Activated CD8-positive, alpha-beta T cell treated with anti-CD3 and anti-CD28 coated beads, Interleukin-2, amount 10 ng/mL, durations not matched to agents 7 days and 5 days (primary cell): ENCODE measurements at regions of chr6 and their contacts with region 1.

Region 1: DNA sequence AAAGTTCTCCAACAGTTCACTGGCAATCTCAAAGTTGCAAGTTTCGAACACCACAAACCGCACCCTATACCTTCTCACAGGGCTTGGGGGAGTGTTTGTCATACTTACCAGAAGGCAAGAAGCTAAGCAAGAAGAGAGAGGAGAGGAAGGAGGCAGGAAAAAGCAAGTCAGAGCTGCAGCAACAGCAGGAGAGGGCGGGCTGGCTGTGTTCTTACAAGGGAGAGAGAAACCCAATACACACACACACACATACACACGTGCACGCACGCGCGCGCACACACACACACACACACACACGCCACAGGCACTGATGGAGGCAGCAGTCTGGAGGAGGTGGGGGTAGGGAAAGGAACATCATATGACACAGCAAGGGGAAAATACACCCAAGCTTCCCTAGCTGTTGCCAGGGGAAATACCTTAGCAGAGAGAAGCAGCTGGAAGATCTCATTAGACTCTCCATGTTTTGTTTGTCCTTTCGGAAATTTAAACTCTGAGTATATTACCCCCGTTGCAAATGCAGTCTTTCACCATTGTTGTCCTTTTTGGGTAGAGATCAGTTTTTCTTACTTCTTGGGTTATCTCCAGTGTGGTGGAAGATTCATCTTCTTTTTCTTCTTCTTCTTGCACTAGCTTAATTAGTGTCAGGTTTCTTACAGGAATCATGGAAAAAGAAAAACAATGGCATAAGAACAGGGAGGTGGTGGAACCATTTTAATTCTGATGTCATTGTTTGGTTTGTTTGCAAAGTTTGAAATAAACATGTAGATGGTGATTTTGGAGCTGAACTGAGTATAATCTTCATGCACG is at the start of gene TXLNB:
- DNase-seq: peak; percentile 89
- ATAC-seq: peak; percentile 94
- H3K4me3 Mint-ChIP-seq: peak within 1 kb of the TSS; percentile 68
- H3K27ac Mint-ChIP-seq: peak within 1 kb of the TSS; percentile 98
- H3K4me1 Mint-ChIP-seq: peaks cover 48% of the 10 kb centered on the region
- H3K27me3 Mint-ChIP-seq: no peaks in the 10 kb centered on the region
- total RNA-seq, gene TXLNB: 0.37 to 0.65 TPM

Region 2: GRCh38 chr6:138979813-138980668 is 312.0 kb before region 1 on chr6:
- CTCF ChIA-PET with region 1: no interaction called
- POLR2A ChIA-PET with region 1: no interaction called
- DNase-seq: no peak
- ATAC-seq: no peak
- H3K4me3 Mint-ChIP-seq: no peak overlapping the region
- H3K27ac Mint-ChIP-seq: no peak overlapping the region
- H3K4me1 Mint-ChIP-seq: peaks cover 6% of the 10 kb centered on the region
- H3K27me3 Mint-ChIP-seq: no peaks in the 10 kb centered on the region

Region 3: GRCh38 chr6:139124887-139125672 is 166.9 kb before region 1 on chr6:
- CTCF ChIA-PET with region 1: interaction called, 12 read pairs
- POLR2A ChIA-PET with region 1: interaction called, 3 read pairs
- DNase-seq: peak; percentile 93
- ATAC-seq: peak; percentile 99
- H3K4me3 Mint-ChIP-seq: peak overlapping the region; percentile 67
- H3K27ac Mint-ChIP-seq: peak overlapping the region; percentile 93
- H3K4me1 Mint-ChIP-seq: peaks cover 41% of the 10 kb centered on the region
- H3K27me3 Mint-ChIP-seq: no peaks in the 10 kb centered on the region

Region 4: GRCh38 chr6:139278190-139278589 is 13.8 kb before region 1 on chr6:
- CTCF ChIA-PET with region 1: interaction called, 15 read pairs
- POLR2A ChIA-PET with region 1: interaction called, 12 read pairs
- DNase-seq: no peak
- ATAC-seq: no peak
- H3K4me3 Mint-ChIP-seq: no peak overlapping the region
- H3K27ac Mint-ChIP-seq: peak overlapping the region; percentile 18
- H3K4me1 Mint-ChIP-seq: peaks cover 39% of the 10 kb centered on the region
- H3K27me3 Mint-ChIP-seq: no peaks in the 10 kb centered on the region

Region 5: GRCh38 chr6:139303185-139303584 is 11.2 kb after region 1 on chr6:
- CTCF ChIA-PET with region 1: interaction called, 10 read pairs
- POLR2A ChIA-PET with region 1: interaction called, 3 read pairs
- DNase-seq: no peak
- ATAC-seq: no peak
- H3K4me3 Mint-ChIP-seq: no peak overlapping the region
- H3K27ac Mint-ChIP-seq: no peak overlapping the region
- H3K4me1 Mint-ChIP-seq: no peaks in the 10 kb centered on the region
- H3K27me3 Mint-ChIP-seq: peaks cover 6% of the 10 kb centered on the region

Region 6: DNA sequence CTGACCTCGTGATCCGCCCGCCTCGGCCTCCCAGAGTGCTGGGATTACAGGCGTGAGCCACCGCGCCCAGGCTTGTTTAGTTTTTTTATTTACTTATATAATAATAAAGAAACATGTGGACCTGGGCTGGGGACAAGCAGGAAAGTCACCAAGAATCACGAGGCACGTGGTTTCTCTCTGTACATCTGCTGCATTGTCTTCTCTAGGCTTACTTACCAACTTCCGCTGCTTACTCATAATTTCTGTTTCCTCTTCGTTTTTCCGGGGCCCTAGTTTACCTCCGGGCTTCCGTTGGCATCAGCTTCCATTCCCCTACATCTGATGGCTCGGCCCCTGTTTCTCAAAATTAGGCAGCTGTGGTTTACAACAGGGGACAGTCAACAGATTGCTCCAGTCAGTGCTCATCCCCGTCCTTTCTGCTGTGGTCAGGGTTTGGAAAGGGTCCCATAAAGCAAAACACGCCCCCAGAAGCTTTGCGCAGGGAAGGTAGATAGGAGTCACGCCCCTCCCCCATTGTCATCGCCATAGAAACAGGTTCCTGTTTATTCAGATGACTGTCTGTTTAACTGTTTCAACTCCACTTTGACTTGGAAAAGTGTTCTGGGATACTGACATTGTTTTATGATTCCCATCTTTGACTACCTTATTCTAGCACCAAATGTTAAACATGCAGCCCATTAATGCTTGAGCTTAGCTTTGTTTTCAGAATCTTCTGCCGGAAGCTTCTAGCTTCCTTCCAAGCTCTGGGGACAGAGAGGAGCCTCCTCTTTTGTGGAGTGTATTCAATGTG is 31.7 kb after region 1 on chr6:
- CTCF ChIA-PET with region 1: interaction called, 19 read pairs
- POLR2A ChIA-PET with region 1: interaction called, 26 read pairs
- DNase-seq: peak; percentile 87
- ATAC-seq: peak; percentile 91
- H3K4me3 Mint-ChIP-seq: peak overlapping the region; percentile 74
- H3K27ac Mint-ChIP-seq: peak overlapping the region; percentile 99
- H3K4me1 Mint-ChIP-seq: peaks cover 23% of the 10 kb centered on the region
- H3K27me3 Mint-ChIP-seq: no peaks in the 10 kb centered on the region

Region 7: DNA sequence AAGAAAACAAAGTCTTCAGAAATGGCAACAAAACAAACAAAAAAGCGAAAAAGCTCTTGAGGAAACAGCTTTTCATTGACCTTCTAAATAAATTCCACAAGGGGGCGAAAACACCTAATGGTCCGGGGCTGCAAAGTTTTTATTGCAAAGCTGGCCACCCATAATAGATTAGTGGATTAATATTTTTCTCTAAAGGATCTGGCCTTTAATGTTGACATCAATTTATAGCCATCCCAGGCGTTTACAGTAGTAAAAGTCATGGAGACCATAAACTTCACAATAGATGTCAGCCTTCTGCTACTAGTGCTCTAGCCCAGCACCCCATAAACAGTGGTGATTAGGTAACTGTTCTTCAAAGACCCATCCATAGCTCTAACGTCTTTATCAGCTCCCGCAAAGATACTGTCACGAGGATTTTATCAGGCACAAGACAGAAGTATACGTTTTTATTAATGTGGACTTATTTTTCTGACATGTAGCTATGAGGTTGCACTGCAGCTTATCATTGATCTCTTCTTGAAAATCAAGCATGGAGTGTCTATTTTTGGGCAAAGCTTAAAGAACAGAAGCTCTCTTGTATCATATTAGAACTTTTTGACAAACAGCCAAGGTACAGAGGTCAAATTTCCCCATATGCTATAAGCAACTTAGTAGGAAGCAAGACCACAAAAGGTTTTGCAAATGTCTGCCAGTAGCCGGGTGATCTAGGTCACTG is 77.7 kb after region 1 on chr6:
- CTCF ChIA-PET with region 1: interaction called, 31 read pairs
- POLR2A ChIA-PET with region 1: interaction called, 35 read pairs
- DNase-seq: no peak
- ATAC-seq: no peak
- H3K4me3 Mint-ChIP-seq: no peak overlapping the region
- H3K27ac Mint-ChIP-seq: no peak overlapping the region
- H3K4me1 Mint-ChIP-seq: peaks cover 43% of the 10 kb centered on the region
- H3K27me3 Mint-ChIP-seq: no peaks in the 10 kb centered on the region

Region 8: GRCh38 chr6:139375232-139376016 is 83.4 kb after region 1 on chr6:
- CTCF ChIA-PET with region 1: interaction called, 17 read pairs
- POLR2A ChIA-PET with region 1: interaction called, 35 read pairs
- DNase-seq: peak; percentile 88
- ATAC-seq: peak; percentile 54
- H3K4me3 Mint-ChIP-seq: peak overlapping the region; percentile 99
- H3K27ac Mint-ChIP-seq: peak overlapping the region; percentile 100
- H3K4me1 Mint-ChIP-seq: peaks cover 34% of the 10 kb centered on the region
- H3K27me3 Mint-ChIP-seq: no peaks in the 10 kb centered on the region

Region 9: DNA sequence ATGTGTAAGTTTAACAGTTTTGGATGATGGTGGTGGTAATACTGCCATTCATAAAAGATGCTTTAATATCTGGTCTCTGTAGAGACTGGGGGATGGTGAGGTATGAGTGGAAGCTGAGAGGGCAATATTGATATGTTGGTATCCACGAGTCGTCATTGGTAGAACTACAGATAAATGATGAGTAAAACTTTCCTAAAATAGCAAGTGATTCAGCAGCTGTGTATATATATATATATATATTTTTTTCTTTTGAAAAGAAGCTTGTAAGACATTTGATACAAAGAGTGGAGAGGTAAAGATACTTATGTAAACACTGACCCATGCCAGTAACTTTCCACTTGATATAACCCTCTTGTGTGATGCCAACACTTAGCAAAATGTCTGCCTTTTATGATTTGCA is 124.1 kb after region 1 on chr6:
- CTCF ChIA-PET with region 1: no interaction called
- POLR2A ChIA-PET with region 1: no interaction called
- DNase-seq: no peak
- ATAC-seq: no peak
- H3K4me3 Mint-ChIP-seq: no peak overlapping the region
- H3K27ac Mint-ChIP-seq: no peak overlapping the region
- H3K4me1 Mint-ChIP-seq: no peaks in the 10 kb centered on the region
- H3K27me3 Mint-ChIP-seq: peaks cover 14% of the 10 kb centered on the region